Activated CD4-positive, alpha-beta T cell treated with anti-CD3 and anti-CD28 coated beads, Interleukin-2, amount 10 ng/mL, durations not matched to agents 24 days and 14 days (primary cell): ENCODE measurements at regions of chrX and their contacts with region 1.

Region 1: DNA sequence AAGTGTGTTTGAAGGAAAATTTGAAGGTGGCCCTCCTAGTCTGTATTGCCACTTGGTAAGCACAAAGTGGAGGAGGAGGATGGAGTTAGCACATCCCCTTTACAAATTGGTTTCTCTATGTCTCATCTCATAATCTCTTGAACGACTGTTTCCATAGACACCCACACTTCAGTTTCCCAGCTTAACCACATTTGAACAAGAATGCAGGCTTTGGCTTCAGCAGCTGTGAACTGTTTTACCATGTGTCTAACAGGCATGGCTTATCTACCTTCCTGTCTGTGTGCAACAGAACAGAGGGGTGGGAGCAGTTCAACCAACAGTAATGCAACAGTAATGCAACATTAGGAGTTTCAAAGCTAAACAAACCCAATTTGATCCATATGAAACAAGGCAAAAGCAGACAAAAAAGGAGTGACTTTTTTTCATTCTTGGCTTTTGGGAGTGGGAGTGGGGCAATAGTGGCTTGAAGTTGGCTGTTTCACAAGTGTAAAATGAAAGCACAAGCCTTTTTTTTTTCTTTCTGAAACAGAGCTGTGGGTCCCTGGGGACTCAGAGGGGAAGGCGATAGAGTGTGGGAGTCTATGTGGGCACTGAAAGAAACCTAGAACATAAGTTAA is 108.0 kb downstream of the ITM2A start:
- DNase-seq: peak; percentile 89
- H3K4me3 Mint-ChIP-seq: peak overlapping the region; percentile 75
- H3K27ac Mint-ChIP-seq: peak overlapping the region; percentile 93
- H3K4me1 Mint-ChIP-seq: peaks cover 52% of the 10 kb centered on the region
- H3K27me3 Mint-ChIP-seq: no peaks in the 10 kb centered on the region

Region 2: GRCh38 chrX:78375894-78376293 is 883.3 kb before region 1 on chrX:
- intact Hi-C with region 1: loop called (anchors 10 kb)
- DNase-seq: peak; percentile 58
- H3K4me3 Mint-ChIP-seq: no peak overlapping the region
- H3K27ac Mint-ChIP-seq: peak overlapping the region; percentile 58
- H3K4me1 Mint-ChIP-seq: peaks cover 23% of the 10 kb centered on the region
- H3K27me3 Mint-ChIP-seq: no peaks in the 10 kb centered on the region

Region 3: GRCh38 chrX:79081895-79082512 is 177.2 kb before region 1 on chrX:
- intact Hi-C with region 1: loop called (anchors 5 kb)
- DNase-seq: peak; percentile 78
- H3K4me3 Mint-ChIP-seq: peak overlapping the region; percentile 78
- H3K27ac Mint-ChIP-seq: peak overlapping the region; percentile 87
- H3K4me1 Mint-ChIP-seq: peaks cover 14% of the 10 kb centered on the region
- H3K27me3 Mint-ChIP-seq: no peaks in the 10 kb centered on the region

Region 4: GRCh38 chrX:79107891-79108718 is 151.1 kb before region 1 on chrX:
- intact Hi-C with region 1: no loop called
- DNase-seq: peak; percentile 60
- H3K4me3 Mint-ChIP-seq: peak overlapping the region; percentile 65
- H3K27ac Mint-ChIP-seq: peak overlapping the region; percentile 95
- H3K4me1 Mint-ChIP-seq: peaks cover 28% of the 10 kb centered on the region
- H3K27me3 Mint-ChIP-seq: no peaks in the 10 kb centered on the region

Region 5: DNA sequence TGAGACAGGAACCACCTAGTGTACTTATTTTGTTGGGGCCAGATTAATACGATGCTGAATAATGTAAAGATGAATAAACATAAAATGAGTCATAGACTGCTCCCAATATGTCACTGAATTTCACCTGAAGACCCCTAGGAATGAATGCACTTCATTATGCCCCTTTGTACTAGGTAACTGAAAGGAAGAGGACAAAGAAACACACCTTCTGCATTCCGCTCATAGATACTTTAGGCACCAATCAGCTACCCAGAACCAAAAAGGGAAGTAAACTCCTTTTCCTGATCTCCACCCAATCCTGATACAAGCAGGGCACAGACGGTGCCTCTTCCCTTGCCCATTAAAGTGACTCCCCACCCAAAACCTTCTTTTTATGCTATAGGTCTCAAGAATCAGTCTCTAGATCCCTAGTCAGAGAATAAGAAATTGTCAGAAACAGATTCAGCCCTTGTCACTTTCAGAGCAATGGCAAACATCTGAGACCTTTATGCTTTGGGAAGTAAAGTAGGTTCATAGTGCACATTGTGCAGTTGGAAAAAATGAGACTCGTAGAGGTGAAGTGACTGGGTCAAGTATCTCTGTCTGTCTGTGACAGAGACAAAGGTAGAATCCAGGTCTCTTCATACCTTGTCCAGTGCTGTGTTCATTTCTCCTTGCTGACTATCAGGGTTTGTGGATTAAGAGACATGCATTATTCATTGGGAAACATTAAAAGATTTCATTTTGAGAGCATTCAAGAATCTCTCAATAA is 112.4 kb before region 1 on chrX:
- intact Hi-C with region 1: loop called (anchors 1 kb)
- DNase-seq: peak; percentile 71
- H3K4me3 Mint-ChIP-seq: peak overlapping the region; percentile 88
- H3K27ac Mint-ChIP-seq: peak overlapping the region; percentile 96
- H3K4me1 Mint-ChIP-seq: peaks cover 26% of the 10 kb centered on the region
- H3K27me3 Mint-ChIP-seq: no peaks in the 10 kb centered on the region

Region 6: DNA sequence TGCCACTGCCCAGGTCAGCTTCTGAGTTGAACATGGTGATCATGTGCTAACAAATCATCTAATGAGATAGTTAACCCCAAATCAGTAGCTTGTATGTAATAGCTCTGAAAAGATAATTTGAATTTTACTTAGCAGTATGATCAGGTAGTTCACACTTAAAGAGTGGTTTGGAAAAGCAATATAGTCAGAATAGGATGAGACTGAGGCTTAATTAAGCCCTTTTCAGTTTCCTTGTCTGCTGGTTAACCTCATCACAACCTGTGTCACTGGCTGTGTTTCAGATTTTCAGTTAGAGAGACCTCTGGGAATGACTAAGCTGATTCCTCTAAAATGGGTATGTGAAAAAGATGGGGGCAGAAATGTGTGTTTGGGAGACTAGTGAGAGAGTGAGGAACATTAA is 76.6 kb before region 1 on chrX:
- intact Hi-C with region 1: loop called (anchors 1 kb)
- DNase-seq: peak; percentile 57
- H3K4me3 Mint-ChIP-seq: peak overlapping the region; percentile 60
- H3K27ac Mint-ChIP-seq: peak overlapping the region; percentile 88
- H3K4me1 Mint-ChIP-seq: peaks cover 26% of the 10 kb centered on the region
- H3K27me3 Mint-ChIP-seq: no peaks in the 10 kb centered on the region

Region 7: DNA sequence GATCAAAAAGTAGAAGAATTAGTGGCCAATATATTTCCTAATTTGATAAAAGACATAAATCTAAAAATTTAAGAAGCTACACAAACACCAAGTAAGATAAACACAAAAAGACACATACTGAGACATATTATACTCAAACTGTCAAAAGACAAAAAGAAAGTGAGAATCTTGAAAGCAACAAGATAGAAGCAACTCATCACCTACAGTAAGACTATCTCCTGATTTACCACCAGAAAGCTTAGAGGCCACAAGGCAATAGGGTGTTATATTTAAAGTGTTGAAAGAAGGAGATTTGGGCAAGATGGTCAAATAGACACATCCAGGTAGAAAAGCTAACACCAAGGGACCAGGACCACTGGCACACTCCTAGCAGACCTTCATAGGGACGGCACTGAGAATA is 28.5 kb after region 1 on chrX:
- intact Hi-C with region 1: no loop called
- DNase-seq: no peak
- H3K4me3 Mint-ChIP-seq: peak overlapping the region; percentile 73
- H3K27ac Mint-ChIP-seq: peak overlapping the region; percentile 70
- H3K4me1 Mint-ChIP-seq: peaks cover 36% of the 10 kb centered on the region
- H3K27me3 Mint-ChIP-seq: no peaks in the 10 kb centered on the region